Dorsolateral prefrontal cortex (tissue), 120 donors: ENCODE measurements at regions of chr3 and their contacts with region 1.

Region 1: GRCh38 chr3:15629860-15630597 is 28.5 kb downstream of the BTD start:
- DNase-seq: peak in 8 of 10 donors; percentile 40 to 84 (median 62)
- H3K4me3 ChIP-seq: peak overlapping the region in 58 of 59 donors; percentile 2 to 67 (median 47)
- H3K27ac ChIP-seq: peak overlapping the region in 56 of 59 donors; percentile 40 to 97 (median 82)
- H3K27me3 ChIP-seq: no peaks in the 10 kb centered on the region
- CTCF ChIP-seq: peak; percentile 67 to 96 (median 88)

Region 2: GRCh38 chr3:15653321-15653720 is 23.3 kb after region 1 on chr3:
- intact Hi-C with region 1: loop called in 1 of 2 experiments (anchors 2 kb)
- DNase-seq: no peak
- H3K4me3 ChIP-seq: no peak overlapping the region
- H3K27ac ChIP-seq: peak overlapping the region in 11 of 59 donors; percentile 11 to 97 (median 89)
- H3K27me3 ChIP-seq: no peaks in the 10 kb centered on the region
- CTCF ChIP-seq: no peak

Region 3: DNA sequence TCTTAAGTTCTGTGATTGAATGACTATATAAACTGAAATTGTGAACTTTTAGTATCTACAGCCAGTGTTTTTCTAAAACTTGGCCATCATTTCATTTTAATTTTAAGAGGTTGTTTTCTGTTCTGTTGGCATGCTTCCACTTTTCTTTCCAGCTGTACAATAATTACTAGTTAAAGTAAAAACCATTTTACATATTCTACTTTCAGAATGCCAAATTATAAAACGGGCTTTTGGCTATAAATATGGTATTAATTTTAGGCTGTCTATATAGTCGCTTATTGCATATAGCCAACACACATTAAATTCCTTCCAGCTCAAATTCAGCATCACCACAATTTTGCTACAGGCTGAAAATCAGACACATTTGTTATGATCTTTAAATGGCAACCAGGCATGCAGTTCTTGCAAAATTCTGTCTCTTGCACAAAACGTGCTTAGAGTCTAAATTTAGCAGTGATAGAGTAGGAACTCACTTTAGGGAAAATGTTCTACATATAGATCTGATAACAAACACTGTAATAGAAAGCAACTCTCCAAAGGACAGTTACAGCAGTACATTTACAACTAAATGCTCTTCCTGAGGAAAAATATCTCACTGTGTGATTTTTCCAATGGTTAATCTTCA is 52.6 kb after region 1 on chr3:
- intact Hi-C with region 1: no loop called
- DNase-seq: no peak
- H3K4me3 ChIP-seq: peak overlapping the region in 6 of 59 donors; percentile 2 to 10 (median 6)
- H3K27ac ChIP-seq: peak overlapping the region in 55 of 59 donors; percentile 1 to 82 (median 68)
- H3K27me3 ChIP-seq: no peaks in the 10 kb centered on the region
- CTCF ChIP-seq: no peak

Region 4: DNA sequence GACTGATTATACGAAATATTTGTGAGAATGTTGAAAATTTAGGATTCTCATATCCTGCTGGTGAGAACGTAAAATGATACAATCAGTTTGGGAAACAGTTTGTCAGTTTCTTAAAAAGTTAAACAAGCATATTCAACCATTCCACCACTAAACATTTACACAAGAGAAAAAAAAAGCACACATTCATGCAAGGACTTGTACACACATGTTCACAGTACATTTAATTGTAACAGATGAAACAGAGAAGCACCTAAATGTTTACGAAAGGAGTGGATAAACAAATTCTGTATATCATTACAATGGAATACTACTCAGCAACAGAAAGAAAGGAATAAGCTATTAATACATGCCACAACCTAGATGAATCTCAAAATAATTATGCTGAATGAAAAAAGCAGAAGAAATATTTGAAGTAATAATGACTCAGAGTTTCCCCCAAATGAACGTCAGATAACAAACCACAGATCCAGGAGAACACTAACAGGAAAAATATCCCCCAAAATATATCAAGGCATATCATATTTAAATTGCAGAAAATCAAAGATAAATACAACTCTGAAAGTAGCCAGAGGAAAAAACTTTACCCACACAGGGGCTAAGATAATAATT is 153.4 kb after region 1 on chr3:
- intact Hi-C with region 1: no loop called
- DNase-seq: no peak
- H3K4me3 ChIP-seq: peak overlapping the region in 7 of 59 donors; percentile 0 to 24 (median 7)
- H3K27ac ChIP-seq: peak overlapping the region in 16 of 59 donors; percentile 1 to 57 (median 23)
- H3K27me3 ChIP-seq: no peaks in the 10 kb centered on the region
- CTCF ChIP-seq: no peak

Region 5: DNA sequence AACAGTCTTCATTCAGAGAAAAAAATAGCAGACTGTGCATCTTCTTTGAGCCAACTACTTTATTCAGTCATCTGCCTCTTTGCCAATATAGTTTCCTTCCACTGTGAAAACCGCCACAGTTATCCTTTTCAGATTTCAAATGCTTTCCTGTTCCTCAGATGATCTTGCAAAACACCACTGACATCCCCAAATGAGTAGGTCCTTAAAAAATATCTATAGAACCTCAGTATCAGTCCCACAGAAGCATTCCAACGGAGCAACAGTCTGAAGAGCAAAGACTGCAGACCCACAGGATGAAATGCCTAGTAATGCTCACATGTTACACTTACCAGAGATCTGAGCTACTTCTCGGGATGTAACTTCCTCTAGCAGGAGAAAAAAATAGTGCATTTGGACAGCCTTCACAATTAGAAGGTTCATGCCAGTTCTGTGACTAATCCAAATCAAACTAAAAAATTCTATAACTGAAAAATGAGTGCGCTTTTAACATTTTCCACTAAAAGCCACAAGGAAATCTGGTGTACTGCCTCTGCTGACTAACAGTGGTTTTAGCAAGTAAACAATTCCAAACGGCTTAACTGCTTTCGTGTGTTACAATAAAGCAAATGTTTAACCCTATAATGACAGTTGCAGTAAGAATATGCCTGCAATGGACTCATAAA is 167.7 kb after region 1 on chr3 and contains the start of gene ANKRD28:
- intact Hi-C with region 1: loop called (anchors 5 kb)
- DNase-seq: peak in 1 of 10 donors; percentile 21
- H3K4me3 ChIP-seq: peak within 1 kb of the TSS; percentile 25 to 74 (median 56)
- H3K27ac ChIP-seq: peak within 1 kb of the TSS; percentile 72 to 97 (median 93)
- H3K27me3 ChIP-seq: no peaks in the 10 kb centered on the region
- CTCF ChIP-seq: peak in 33 of 56 donors; percentile 17 to 50 (median 37)
- total RNA-seq, gene ANKRD28: 46.9 to 110 (median 74.2) TPM

Region 6: GRCh38 chr3:15815696-15816095 is 185.7 kb after region 1 on chr3:
- intact Hi-C with region 1: loop called (anchors 1 to 5 kb)
- DNase-seq: no peak
- H3K4me3 ChIP-seq: no peak overlapping the region
- H3K27ac ChIP-seq: peak overlapping the region in 11 of 59 donors; percentile 1 to 55 (median 26)
- H3K27me3 ChIP-seq: no peaks in the 10 kb centered on the region
- CTCF ChIP-seq: peak; percentile 18 to 83 (median 62)

Region 7: DNA sequence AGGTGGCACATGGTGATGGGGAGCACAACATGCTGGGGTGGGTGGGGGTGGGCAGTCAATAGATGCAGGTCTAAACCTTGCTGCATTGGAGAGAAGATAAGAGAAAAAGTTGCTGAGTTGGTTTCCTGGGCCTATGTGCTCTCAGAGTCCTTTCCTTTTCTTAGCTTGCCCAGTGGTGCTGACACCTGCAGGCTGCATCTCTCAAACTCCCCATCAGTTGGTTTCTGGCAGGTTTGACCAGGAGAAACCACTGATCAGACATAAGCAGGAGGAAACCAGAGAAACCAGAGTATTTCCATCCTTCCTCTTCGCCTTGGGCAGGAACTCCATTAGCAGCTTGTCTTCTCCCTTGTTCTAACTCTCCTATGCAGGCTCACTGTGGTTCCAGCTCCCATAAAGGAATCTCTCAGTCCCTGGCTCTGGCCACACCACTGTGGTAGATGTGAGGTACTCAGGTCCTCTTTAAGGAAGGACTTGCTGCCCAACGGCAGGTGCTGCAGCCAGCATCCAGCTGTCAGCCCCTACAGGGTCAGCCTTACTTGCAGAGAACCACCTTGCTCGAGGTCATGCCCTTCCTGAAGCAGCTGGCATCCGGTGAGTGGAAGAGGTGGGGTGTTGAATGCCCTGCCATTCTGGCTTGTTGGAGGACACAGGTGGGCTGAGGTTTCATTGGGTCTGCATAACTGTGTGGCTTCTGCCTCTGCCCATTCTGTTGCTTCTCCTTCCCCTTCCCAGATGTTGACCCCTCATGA is 340.0 kb after region 1 on chr3:
- intact Hi-C with region 1: no loop called
- DNase-seq: no peak
- H3K4me3 ChIP-seq: no peak overlapping the region
- H3K27ac ChIP-seq: no peak overlapping the region
- H3K27me3 ChIP-seq: no peaks in the 10 kb centered on the region
- CTCF ChIP-seq: no peak

Region 8: GRCh38 chr3:15982667-15983145 is 352.7 kb after region 1 on chr3:
- intact Hi-C with region 1: no loop called
- DNase-seq: peak in 9 of 10 donors; percentile 47 to 79 (median 59)
- H3K4me3 ChIP-seq: peak overlapping the region in 56 of 59 donors; percentile 9 to 64 (median 38)
- H3K27ac ChIP-seq: peak overlapping the region in 57 of 59 donors; percentile 11 to 87 (median 76)
- H3K27me3 ChIP-seq: no peaks in the 10 kb centered on the region
- CTCF ChIP-seq: peak in 3 of 56 donors; percentile 14 to 43 (median 18)

Region 9: DNA sequence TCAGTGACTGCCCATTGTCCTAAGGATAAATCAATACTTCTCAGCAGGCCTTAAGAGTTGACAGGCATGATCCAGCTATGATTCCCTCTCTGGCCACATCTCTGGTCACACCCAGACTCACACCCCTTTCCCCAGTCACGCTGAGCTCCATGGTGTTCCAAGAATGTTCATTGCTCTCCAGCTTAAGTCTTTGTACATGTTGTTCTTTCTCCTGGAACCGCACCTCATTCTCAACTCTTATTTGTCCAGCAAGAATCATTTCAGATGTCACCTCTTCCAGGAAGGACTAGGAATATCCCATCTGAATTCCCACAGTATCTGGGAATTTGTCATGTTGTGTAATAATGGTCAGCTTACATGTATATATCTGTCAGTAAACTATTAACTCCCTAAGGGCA is 426.2 kb after region 1 on chr3:
- intact Hi-C with region 1: loop called in 1 of 2 experiments (anchors 10 kb)
- DNase-seq: no peak
- H3K4me3 ChIP-seq: peak overlapping the region in 1 of 59 donors; percentile 42
- H3K27ac ChIP-seq: peak overlapping the region in 50 of 59 donors; percentile 0 to 93 (median 67)
- H3K27me3 ChIP-seq: no peaks in the 10 kb centered on the region
- CTCF ChIP-seq: no peak

Region 10: GRCh38 chr3:16247276-16248061 is 617.4 kb after region 1 on chr3:
- intact Hi-C with region 1: loop called (anchors 10 kb)
- DNase-seq: peak; percentile 59 to 91 (median 84)
- H3K4me3 ChIP-seq: peak overlapping the region in 5 of 59 donors; percentile 6 to 31 (median 22)
- H3K27ac ChIP-seq: peak overlapping the region in 2 of 59 donors; percentile 18 to 56
- H3K27me3 ChIP-seq: no peaks in the 10 kb centered on the region
- CTCF ChIP-seq: peak; percentile 89 to 100 (median 95)

Region 11: DNA sequence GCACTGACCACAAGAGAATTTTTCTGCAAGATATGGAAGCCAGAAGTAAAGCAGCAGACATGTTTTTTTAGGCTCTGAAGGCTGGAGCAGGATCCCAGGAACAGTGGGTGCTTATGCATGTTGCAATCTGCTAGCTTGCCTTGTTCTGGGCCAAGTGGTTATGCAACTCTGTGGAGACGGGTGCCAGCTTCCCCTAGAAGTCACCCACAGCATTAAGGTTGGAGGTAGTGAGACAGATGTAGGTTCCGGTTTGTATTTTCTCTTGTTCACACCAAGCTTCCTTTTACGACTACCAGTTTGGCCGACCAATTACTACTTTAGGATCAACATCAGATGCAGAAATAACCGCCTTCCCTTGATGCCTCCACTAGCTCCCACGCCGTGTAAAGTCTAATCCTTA is 623.6 kb after region 1 on chr3:
- intact Hi-C with region 1: loop called (anchors 10 kb)
- DNase-seq: peak in 9 of 10 donors; percentile 37 to 77 (median 56)
- H3K4me3 ChIP-seq: no peak overlapping the region
- H3K27ac ChIP-seq: peak overlapping the region in 49 of 59 donors; percentile 4 to 85 (median 61)
- H3K27me3 ChIP-seq: no peaks in the 10 kb centered on the region
- CTCF ChIP-seq: no peak